Calu3 (cell line): ENCODE measurements at regions of chrX and their contacts with region 1.

Region 1: GRCh38 chrX:49163555-49164419 is 1.2 kb downstream of the MAGIX start:
- DNase-seq: peak; percentile 88
- H3K4me3 Mint-ChIP-seq: peak overlapping the region; percentile 94
- H3K27ac Mint-ChIP-seq: peak overlapping the region; percentile 17
- H3K4me1 Mint-ChIP-seq: peaks cover 31% of the 10 kb centered on the region
- H3K27me3 Mint-ChIP-seq: no peaks in the 10 kb centered on the region
- CTCF ChIP-seq: peak; percentile 65

Region 2: DNA sequence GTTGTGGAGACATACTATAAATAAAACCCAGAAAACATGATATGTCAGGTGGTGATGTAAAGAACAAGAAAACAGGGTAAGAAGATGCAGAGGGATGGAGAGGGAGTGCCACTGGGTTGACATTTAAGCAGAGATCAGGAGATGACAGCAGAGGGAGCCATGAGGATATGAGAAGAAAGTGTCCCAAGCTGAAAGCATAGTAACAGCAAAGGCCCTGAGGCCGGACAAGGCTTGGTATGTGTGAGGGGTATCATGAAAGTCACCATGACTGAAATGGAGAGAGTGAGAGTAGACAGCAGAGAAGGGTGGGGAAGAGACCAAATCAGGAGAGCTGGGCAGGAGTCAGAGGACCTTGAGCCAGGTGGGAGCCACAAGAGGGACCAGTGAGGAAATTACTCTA is 43.7 kb before region 1 on chrX:
- CTCF ChIA-PET with region 1: interaction called, 3 read pairs
- intact Hi-C with region 1: loop called (anchors 1 kb)
- DNase-seq: peak; percentile 7
- H3K4me3 Mint-ChIP-seq: no peak overlapping the region
- H3K27ac Mint-ChIP-seq: peak overlapping the region; percentile 45
- H3K4me1 Mint-ChIP-seq: peaks cover 28% of the 10 kb centered on the region
- H3K27me3 Mint-ChIP-seq: no peaks in the 10 kb centered on the region
- CTCF ChIP-seq: no peak

Region 3: GRCh38 chrX:49184294-49185061 is 20.7 kb after region 1 on chrX:
- CTCF ChIA-PET with region 1: interaction called, 11 read pairs
- intact Hi-C with region 1: no loop called
- DNase-seq: peak; percentile 93
- H3K4me3 Mint-ChIP-seq: peak overlapping the region; percentile 86
- H3K27ac Mint-ChIP-seq: peak overlapping the region; percentile 77
- H3K4me1 Mint-ChIP-seq: peaks cover 19% of the 10 kb centered on the region
- H3K27me3 Mint-ChIP-seq: no peaks in the 10 kb centered on the region
- CTCF ChIP-seq: no peak

Region 4: GRCh38 chrX:49191033-49191871 is 27.5 kb after region 1 on chrX:
- CTCF ChIA-PET with region 1: interaction called, 11 read pairs
- intact Hi-C with region 1: no loop called
- DNase-seq: peak; percentile 90
- H3K4me3 Mint-ChIP-seq: peak overlapping the region; percentile 75
- H3K27ac Mint-ChIP-seq: peak overlapping the region; percentile 99
- H3K4me1 Mint-ChIP-seq: peaks cover 24% of the 10 kb centered on the region
- H3K27me3 Mint-ChIP-seq: peaks cover 9% of the 10 kb centered on the region
- CTCF ChIP-seq: no peak